ENCODE measurements at regions of chr12 and their contacts with region 1.

Region 1: DNA sequence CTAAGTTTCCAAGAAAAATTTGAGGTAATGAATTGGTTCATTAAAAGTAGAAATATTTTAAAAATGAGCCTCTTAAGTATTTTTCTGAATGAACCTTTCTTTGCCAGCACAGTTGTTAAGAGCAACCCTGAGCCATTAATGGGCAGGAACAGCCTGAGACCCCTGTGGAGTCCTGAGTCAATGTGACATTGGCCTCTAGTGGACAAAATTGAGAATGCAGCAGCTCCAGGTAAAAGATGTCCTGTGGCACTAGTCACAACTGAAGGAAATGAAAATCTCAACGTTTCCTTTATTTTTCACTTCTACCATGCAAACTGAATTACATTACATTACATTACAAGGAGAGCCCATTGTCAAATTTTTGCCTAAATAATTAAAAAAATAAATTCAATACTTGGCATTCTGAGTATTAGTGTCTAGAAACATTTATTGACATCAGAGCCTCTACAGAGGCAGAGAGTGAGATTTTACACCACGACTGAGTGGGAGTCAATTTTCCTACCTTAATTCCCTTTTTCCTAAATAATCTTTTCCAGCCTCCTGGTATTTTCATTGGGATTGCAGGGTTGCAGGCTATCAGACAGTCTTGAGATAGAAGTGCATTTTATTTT is 135.7 kb downstream of the PPM1H start:
- DNase-seq: peak; percentile 48
- ATAC-seq: peak; percentile 90
- H3K4me3 ChIP-seq: no peak overlapping the region
- H3K27ac ChIP-seq: no peak overlapping the region
- H3K4me1 ChIP-seq: peaks cover 0 to 3% of the 10 kb centered on the region in 2 experiments; a peak in 1 of 4 replicates
- H3K27me3 ChIP-seq: no peaks in the 10 kb centered on the region
- CTCF ChIP-seq: peak; percentile 82 to 96 (median 88)
- POLR2A ChIP-seq: no peak
- RAD21 ChIP-seq: peak; percentile 91

Region 2: DNA sequence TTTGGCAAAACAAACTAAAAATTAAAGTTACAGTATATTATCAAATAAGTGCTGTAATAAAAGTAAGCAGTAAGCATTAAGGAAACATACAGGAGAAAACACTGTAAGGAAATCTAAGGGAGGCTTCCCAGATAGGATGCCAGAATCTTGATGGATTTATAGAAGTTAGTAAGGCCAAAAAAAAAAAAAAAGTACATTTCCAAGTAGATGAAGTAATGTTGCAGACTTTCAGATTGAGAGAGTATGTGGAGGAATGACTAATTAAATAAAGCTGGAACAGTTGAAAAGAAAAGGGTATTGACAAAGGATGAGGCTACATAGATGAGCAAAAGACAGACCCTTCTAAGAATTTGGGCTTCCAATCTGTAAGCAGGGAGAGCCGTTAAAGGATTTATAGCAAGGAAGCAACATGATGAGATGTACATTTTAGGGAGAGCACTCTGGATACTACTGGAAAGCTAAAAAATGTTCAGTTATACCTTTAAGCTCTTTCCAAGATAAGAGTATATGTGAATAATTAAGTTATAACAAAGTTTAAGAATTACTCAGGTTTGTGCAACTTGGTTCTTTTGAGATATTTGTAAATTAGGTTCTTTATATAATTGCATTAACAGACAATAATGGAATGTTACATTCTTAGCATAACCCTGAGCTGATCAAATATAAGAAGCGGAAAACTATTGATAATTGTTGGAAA is 420.1 kb before region 1 on chr12:
- CTCF ChIA-PET with region 1: no interaction called
- POLR2A ChIA-PET with region 1: no interaction called
- RAD21 ChIA-PET with region 1: no interaction called
- intact Hi-C with region 1: no loop called
- DNase-seq: no peak
- ATAC-seq: no peak
- H3K4me3 ChIP-seq: no peak overlapping the region
- H3K27ac ChIP-seq: no peak overlapping the region
- H3K4me1 ChIP-seq: no peaks in the 10 kb centered on the region
- H3K27me3 ChIP-seq: no peaks in the 10 kb centered on the region
- CTCF ChIP-seq: no peak
- POLR2A ChIP-seq: no peak
- RAD21 ChIP-seq: no peak

Region 3: GRCh38 chr12:62435303-62436163 is 363.7 kb before region 1 on chr12:
- CTCF ChIA-PET with region 1: interaction called, 42 read pairs
- POLR2A ChIA-PET with region 1: no interaction called
- RAD21 ChIA-PET with region 1: interaction called, 5 to 6 read pairs
- intact Hi-C with region 1: loop called (anchors 1 kb)
- DNase-seq: no peak
- ATAC-seq: no peak
- H3K4me3 ChIP-seq: no peak overlapping the region
- H3K27ac ChIP-seq: no peak overlapping the region
- H3K4me1 ChIP-seq: no peaks in the 10 kb centered on the region
- H3K27me3 ChIP-seq: no peaks in the 10 kb centered on the region
- CTCF ChIP-seq: no peak
- POLR2A ChIP-seq: no peak
- RAD21 ChIP-seq: no peak

Measured in HCT116 (cell line).